ENCODE measurements at regions of chr7 and their contacts with region 1.

Region 1: DNA sequence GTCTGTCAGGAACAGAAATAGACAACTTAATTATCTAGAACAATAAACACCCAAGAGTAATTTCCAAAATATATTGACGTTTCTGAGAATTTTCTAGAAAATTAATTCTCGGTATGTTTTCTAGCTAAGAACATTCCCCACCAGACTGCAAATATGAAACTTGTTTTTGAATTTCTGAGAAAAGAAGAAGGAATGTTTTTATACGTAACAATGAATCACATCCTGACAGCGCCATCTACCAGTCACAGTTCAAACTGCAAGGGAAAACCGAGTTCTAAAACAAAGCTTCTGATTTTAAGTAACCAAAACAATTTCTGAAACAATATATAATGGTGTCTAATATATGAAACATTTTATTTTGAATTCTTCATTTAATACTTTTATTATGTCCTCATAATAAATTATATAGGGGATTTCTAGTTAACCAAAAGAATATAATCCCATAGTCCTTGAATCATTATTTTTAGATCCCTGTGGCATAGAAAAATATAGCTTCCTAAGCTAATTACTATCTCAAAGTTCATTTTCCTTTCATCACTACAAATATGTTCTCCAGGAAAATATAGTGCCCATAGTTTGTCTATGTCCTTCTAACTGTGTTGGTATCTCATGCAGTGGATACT is 34.5 kb upstream of the MEOX2 start:
- DNase-seq: peak; percentile 84
- H3K4me3 ChIP-seq: no peak overlapping the region
- H3K27ac ChIP-seq: peak overlapping the region; percentile 11
- H3K4me1 ChIP-seq: peaks cover 17% of the 10 kb centered on the region
- H3K27me3 ChIP-seq: no peaks in the 10 kb centered on the region
- CTCF ChIP-seq: peak; percentile 50 to 52
- POLR2A ChIP-seq: no peak

Region 2: DNA sequence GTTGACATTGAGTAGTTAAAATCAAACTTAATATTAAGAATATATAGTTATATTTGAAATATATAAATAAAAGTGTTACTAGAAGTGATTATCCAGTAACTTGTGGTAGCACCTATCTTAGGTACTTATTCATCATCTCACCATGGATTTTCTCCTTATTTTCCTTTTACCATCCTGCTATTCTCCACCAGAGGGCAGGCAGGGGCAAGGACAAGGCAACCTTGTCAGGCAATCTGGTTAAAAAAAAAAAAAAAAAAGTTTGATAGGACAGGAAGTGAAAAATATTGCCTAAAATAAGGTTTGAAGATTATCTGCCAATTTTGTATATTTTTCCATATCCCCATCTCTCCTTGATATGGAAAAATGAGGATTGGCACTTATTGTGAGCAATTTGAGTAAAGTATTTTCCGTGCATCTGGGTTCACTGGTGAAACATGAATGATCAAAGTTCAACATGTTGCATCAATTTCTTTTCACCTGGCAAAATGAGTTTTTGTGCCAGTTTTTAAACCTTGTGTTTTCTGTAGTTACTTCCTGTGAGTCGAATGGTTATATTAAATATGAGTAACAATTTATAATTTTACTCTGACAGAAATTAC is 415.9 kb before region 1 on chr7:
- CTCF ChIA-PET with region 1: interaction called, 30 read pairs
- POLR2A ChIA-PET with region 1: no interaction called
- dilution Hi-C with region 1: loop called (anchors 25 kb)
- intact Hi-C with region 1: loop called (anchors 1 kb)
- DNase-seq: peak; percentile 65
- H3K4me3 ChIP-seq: no peak overlapping the region
- H3K27ac ChIP-seq: no peak overlapping the region
- H3K4me1 ChIP-seq: no peaks in the 10 kb centered on the region
- H3K27me3 ChIP-seq: no peaks in the 10 kb centered on the region
- CTCF ChIP-seq: peak; percentile 61 to 66
- POLR2A ChIP-seq: no peak

Region 3: DNA sequence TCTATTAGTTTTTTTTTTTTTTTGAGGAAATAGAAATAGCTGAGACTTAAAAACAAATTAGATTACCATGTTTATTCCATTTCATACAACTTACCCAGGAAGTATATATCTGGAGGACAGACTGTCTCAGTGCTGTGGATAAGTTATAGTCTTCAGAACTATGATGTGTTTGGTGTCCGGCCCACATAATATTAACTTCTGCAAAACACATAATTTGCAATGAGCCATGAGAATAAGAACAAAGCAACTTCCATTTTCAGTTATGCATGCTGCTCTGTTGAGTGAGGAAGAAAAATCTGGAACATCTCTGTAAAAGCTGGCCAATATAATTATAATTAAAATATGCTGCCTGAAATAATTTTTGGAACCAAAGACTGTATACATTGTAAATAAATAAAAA is 290.0 kb before region 1 on chr7:
- CTCF ChIA-PET with region 1: no interaction called
- POLR2A ChIA-PET with region 1: no interaction called
- dilution Hi-C with region 1: no loop called
- intact Hi-C with region 1: no loop called
- DNase-seq: no peak
- H3K4me3 ChIP-seq: no peak overlapping the region
- H3K27ac ChIP-seq: no peak overlapping the region
- H3K4me1 ChIP-seq: no peaks in the 10 kb centered on the region
- H3K27me3 ChIP-seq: no peaks in the 10 kb centered on the region
- CTCF ChIP-seq: no peak
- POLR2A ChIP-seq: no peak

Region 4: GRCh38 chr7:15503603-15504290 is 217.2 kb before region 1 on chr7:
- CTCF ChIA-PET with region 1: interaction called, 10 read pairs
- POLR2A ChIA-PET with region 1: no interaction called
- dilution Hi-C with region 1: no loop called
- intact Hi-C with region 1: loop called (anchors 1 kb)
- DNase-seq: peak; percentile 76
- H3K4me3 ChIP-seq: no peak overlapping the region
- H3K27ac ChIP-seq: peak overlapping the region; percentile 71
- H3K4me1 ChIP-seq: peaks cover 54% of the 10 kb centered on the region
- H3K27me3 ChIP-seq: no peaks in the 10 kb centered on the region
- CTCF ChIP-seq: no peak
- POLR2A ChIP-seq: no peak

Region 5: GRCh38 chr7:15561835-15562234 is 159.1 kb before region 1 on chr7 and contains the start of gene AGMO:
- CTCF ChIA-PET with region 1: interaction called, 8 read pairs
- POLR2A ChIA-PET with region 1: no interaction called
- dilution Hi-C with region 1: loop called (anchors 25 kb)
- intact Hi-C with region 1: loop called (anchors 5 kb)
- DNase-seq: peak; percentile 37
- H3K4me3 ChIP-seq: no peak within 1 kb of the TSS
- H3K27ac ChIP-seq: no peak within 1 kb of the TSS
- H3K4me1 ChIP-seq: peaks cover 15% of the 10 kb centered on the region
- H3K27me3 ChIP-seq: no peaks in the 10 kb centered on the region
- CTCF ChIP-seq: no peak
- POLR2A ChIP-seq: no peak
- total RNA-seq, gene AGMO: 0.40 and 1.2 TPM in 2 replicates

Region 6: GRCh38 chr7:15709978-15710377 is 11.0 kb before region 1 on chr7:
- CTCF ChIA-PET with region 1: interaction called, 41 read pairs
- POLR2A ChIA-PET with region 1: no interaction called
- dilution Hi-C with region 1: no loop called
- intact Hi-C with region 1: no loop called
- DNase-seq: peak; percentile 60
- H3K4me3 ChIP-seq: no peak overlapping the region
- H3K27ac ChIP-seq: peak overlapping the region; percentile 57
- H3K4me1 ChIP-seq: peaks cover 40% of the 10 kb centered on the region
- H3K27me3 ChIP-seq: no peaks in the 10 kb centered on the region
- CTCF ChIP-seq: no peak
- POLR2A ChIP-seq: no peak

Region 7: DNA sequence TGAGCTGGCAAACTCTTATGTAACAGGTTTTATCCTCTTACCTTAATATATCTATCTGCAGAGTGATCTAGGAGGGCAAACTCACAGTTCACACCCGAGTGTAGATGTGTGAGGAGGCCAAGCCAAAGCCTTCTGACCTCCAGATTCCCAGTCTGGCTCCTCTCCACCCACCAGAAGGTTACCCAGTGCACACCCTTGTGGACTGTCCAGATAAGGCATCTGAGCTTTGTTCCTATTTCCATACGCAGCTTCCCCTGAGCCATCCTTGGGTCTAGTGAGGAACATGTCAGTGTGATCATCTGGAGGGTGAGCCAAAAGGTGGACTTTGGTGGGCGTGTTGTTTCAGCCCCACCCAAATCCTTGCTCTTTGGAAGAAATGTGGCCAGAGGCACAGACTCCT is 168.5 kb after region 1 on chr7:
- CTCF ChIA-PET with region 1: interaction called, 10 read pairs
- POLR2A ChIA-PET with region 1: no interaction called
- dilution Hi-C with region 1: no loop called
- intact Hi-C with region 1: no loop called
- DNase-seq: peak; percentile 29
- H3K4me3 ChIP-seq: no peak overlapping the region
- H3K27ac ChIP-seq: no peak overlapping the region
- H3K4me1 ChIP-seq: no peaks in the 10 kb centered on the region
- H3K27me3 ChIP-seq: no peaks in the 10 kb centered on the region
- CTCF ChIP-seq: peak; percentile 21 to 24
- POLR2A ChIP-seq: no peak

Region 8: GRCh38 chr7:16098585-16099179 is 377.7 kb after region 1 on chr7:
- CTCF ChIA-PET with region 1: interaction called, 12 read pairs
- POLR2A ChIA-PET with region 1: no interaction called
- dilution Hi-C with region 1: no loop called
- intact Hi-C with region 1: no loop called
- DNase-seq: peak; percentile 85
- H3K4me3 ChIP-seq: no peak overlapping the region
- H3K27ac ChIP-seq: peak overlapping the region; percentile 86
- H3K4me1 ChIP-seq: peaks cover 22% of the 10 kb centered on the region
- H3K27me3 ChIP-seq: no peaks in the 10 kb centered on the region
- CTCF ChIP-seq: peak; percentile 64 to 70
- POLR2A ChIP-seq: no peak

Measured in endothelial cell of umbilical vein (primary cell).